Activated B cell treated with CpG ODN at 0.5 μM for 24 hours (primary cell): ENCODE measurements at regions of chr7 and their contacts with region 1.

Region 1: GRCh38 chr7:154996752-154997151 is 6.2 kb downstream of the PAXIP1 start:
- DNase-seq: no peak
- ATAC-seq: no peak
- H3K4me3 Mint-ChIP-seq: no peak overlapping the region
- H3K27ac Mint-ChIP-seq: no peak overlapping the region
- H3K4me1 Mint-ChIP-seq: peaks cover 2% of the 10 kb centered on the region
- H3K27me3 Mint-ChIP-seq: no peaks in the 10 kb centered on the region
- CTCF ChIP-seq: no peak

Region 2: DNA sequence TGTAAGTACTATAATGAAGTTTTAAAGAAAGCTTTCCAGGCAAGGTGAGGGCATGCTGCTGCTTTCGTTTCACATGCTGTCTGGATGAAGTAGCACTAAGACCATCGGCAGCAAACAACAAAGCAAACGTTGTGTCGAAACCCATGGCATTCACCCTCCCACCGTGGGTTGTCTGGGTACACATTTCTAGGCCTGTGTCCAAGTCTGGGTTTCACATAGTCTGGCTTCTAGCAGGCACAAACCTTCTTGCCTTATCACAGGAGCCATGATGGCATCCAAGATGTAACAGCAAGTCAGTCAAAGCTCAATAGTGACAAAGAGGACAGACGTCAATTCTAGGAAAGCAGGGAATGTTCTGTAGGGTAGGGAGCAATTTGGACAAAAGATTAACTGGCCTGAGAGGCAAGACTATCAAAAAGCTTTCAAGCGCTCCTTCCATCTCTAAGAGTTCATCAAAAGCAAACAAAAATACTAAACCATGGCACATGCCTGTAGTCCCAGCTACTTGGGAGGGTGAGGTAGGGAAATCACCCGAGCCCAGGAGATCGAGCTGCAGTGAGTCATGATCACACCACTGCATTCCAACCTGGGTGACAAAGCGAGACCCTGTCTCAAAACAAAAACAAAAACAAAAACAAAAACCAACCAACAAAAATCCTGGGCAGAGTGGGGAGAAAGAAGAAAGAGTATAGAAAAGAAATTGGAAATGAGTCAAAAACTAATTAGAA is 36.5 kb before region 1 on chr7:
- CTCF ChIA-PET with region 1: no interaction called
- POLR2A ChIA-PET with region 1: no interaction called
- intact Hi-C with region 1: loop called (anchors 5 kb)
- DNase-seq: no peak
- ATAC-seq: no peak
- H3K4me3 Mint-ChIP-seq: no peak overlapping the region
- H3K27ac Mint-ChIP-seq: no peak overlapping the region
- H3K4me1 Mint-ChIP-seq: no peaks in the 10 kb centered on the region
- H3K27me3 Mint-ChIP-seq: no peaks in the 10 kb centered on the region
- CTCF ChIP-seq: no peak